GM10248 (cell line): ENCODE measurements at regions of chr5 and their contacts with region 1.

Region 1: GRCh38 chr5:149367249-149367971 is 9.6 kb downstream of the PCYOX1L start:
- DNase-seq: peak; percentile 84
- CTCF ChIP-seq: peak; percentile 82

Region 2: DNA sequence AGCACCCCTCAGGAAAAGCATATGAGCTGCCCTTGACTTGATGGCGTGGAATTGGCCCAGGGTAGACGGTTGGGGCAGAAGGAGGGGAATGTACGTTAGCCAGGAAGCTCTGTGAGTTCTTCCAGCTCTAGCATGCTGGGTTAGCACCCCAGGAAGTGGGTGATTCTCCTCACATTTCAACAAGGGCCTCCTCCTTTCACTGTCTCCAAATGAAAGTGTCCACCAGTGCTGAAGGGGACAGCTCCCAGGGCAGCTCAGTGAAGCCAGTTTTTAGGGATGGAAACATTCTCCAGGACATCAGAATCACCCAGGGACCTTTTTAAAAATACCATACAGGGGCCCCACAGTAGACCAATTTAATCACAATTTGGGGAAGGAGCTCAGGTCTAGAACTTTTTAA is 112.9 kb before region 1 on chr5:
- CTCF ChIA-PET with region 1: no interaction called
- POLR2A ChIA-PET with region 1: no interaction called
- DNase-seq: no peak
- CTCF ChIP-seq: no peak

Region 3: DNA sequence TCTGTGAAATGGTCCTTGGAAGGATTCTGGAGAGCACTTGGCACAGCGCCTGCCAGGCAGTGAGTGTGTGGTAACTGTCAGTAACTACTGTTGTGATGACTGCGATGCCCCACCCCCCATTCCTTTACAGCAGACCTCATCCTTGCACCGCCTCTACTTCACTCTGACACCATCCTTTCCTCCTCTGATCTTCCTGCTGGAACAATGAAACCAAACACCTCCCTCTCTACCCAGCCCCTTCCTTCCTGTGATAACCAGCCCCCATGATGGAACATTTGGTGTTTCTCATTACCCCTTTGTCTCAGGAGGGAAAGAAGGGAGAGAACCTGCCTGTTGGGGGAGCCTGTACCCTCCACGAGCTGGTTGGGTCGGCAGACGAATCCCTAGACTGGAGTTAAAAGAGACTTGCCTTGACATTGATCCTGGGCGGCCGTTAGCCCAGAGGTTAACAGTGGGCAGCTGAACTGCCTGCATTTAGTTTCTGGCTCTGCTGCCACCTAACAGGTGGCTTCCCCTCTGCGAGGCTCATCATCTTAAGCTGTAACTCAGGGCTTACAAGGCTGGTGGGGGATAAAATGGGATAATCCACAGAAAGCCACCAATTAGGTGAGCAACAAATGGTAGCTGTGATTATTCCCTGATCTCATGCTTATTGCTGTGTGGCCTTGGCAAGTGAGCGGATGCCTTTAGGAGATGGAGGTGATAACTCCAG is 56.3 kb before region 1 on chr5:
- CTCF ChIA-PET with region 1: interaction called, 19 read pairs
- POLR2A ChIA-PET with region 1: no interaction called
- DNase-seq: no peak
- CTCF ChIP-seq: no peak

Region 4: DNA sequence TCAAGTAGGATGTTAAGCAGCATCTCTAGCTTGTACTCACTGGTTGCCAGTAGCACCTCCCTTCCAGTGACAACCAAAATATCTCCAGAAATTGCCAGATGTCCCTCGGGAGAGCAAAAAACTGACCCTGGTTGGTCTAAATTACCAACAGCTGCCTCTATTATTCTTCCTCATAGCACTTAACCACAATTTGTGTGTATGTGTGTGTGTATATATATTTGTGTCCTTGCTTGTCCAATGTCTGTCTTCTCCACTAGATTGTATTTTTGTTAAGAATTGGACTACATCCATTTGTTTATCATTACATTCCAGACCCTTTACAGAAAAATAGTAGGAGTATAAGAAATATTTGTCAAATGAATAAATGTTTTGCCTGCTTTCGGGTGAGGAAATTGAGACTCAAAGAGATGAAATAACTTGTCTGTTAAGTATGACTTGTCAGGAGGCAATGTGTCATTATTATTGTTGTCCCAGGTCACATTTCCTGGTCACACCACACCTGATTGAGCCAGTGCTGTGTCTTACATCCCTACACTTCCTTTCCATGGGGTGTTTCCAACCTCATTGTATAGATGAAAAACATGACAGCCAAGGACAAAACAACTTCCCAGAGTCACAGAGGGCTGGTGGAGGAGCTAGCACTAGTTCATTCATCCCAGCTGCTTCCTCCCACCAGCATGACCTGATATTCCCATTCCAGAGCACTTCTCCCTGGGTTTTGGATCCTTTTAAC is 33.5 kb before region 1 on chr5:
- CTCF ChIA-PET with region 1: interaction called, 152 read pairs
- POLR2A ChIA-PET with region 1: no interaction called
- DNase-seq: no peak
- CTCF ChIP-seq: no peak

Region 5: GRCh38 chr5:149381987-149382340 is 14.6 kb after region 1 on chr5:
- CTCF ChIA-PET with region 1: interaction called, 81 read pairs
- POLR2A ChIA-PET with region 1: no interaction called
- DNase-seq: peak; percentile 89
- CTCF ChIP-seq: peak; percentile 94

Region 6: GRCh38 chr5:149434162-149435014 is 67.0 kb after region 1 on chr5:
- CTCF ChIA-PET with region 1: interaction called, 32 read pairs
- POLR2A ChIA-PET with region 1: no interaction called
- DNase-seq: peak; percentile 74
- CTCF ChIP-seq: peak; percentile 53

Region 7: GRCh38 chr5:149504677-149505076 is 137.3 kb after region 1 on chr5:
- CTCF ChIA-PET with region 1: no interaction called
- POLR2A ChIA-PET with region 1: no interaction called
- DNase-seq: no peak
- CTCF ChIP-seq: no peak

Region 8: DNA sequence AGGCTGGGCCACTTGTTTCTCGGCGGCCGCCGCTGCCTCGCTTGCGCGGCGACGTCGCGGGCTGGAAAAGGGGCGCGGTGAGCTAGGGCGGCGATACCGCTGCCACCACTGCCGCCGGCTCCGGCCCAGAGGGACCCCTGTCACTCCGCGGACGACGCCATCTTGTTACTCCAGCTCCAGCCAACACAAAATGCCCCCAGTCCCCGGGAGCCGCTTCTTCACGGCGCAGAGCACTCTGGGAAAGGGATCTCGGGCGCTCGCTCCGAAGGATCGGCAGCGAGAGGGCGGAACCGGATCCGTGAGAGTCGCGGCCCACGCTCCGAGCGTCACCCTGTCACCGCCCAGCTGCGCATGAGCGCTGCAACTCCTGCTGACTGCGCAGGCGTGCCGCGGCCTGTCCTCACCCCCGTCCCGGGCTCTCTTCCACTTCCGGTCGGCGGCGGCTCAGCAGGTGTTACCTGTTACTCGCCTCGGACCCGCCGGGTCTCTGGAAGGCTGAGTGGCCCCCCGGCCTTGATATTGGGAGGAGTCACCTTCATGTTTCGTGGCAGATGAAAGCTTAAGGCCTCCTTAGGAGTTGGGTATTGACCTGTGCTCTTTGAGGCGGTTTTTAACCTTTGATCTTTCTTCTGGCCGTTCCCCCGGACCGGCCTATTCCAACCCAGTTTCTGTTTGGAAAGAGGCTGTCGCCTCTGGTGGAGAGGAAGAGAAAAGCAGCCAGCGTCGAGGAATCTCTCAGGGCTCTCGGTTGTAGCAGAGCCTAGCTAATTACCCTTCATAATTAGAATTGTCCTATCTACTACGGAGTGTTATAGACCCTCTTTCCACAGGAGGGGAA is 184.0 kb after region 1 on chr5 and contains the start of gene CSNK1A1:
- CTCF ChIA-PET with region 1: interaction called, 10 read pairs
- POLR2A ChIA-PET with region 1: no interaction called
- DNase-seq: peak; percentile 100
- CTCF ChIP-seq: peak; percentile 69

Region 9: DNA sequence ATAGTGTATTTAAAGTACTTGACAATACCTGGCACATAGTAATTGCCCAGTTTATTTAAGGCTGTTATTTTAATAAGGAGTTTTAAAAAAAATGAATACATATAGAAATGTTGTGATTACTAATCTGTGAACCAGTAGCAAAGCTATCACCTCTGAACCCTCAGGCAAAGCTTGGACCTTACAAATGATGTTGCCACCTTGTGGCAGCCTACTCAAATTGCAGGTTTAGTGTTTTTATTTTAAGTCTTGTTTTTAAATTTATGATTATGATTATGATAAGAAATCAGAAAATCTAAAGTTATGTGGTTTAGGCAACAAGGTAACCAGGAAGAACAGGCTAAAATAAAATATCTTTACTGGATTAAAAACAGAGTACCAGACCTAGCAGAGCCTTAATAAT is 398.5 kb after region 1 on chr5:
- CTCF ChIA-PET with region 1: no interaction called
- POLR2A ChIA-PET with region 1: no interaction called
- DNase-seq: no peak
- CTCF ChIP-seq: no peak